Activated naive CD4-positive, alpha-beta T cell treated with anti-CD3 and anti-CD28 coated beads for 36 hours (primary cell): ENCODE measurements at regions of chr3 and their contacts with region 1.

Region 1: GRCh38 chr3:46378426-46378942 is 7.7 kb downstream of the CCR5 start:
- DNase-seq: peak; percentile 85
- H3K4me3 Mint-ChIP-seq: no peak overlapping the region
- H3K27ac Mint-ChIP-seq: no peak overlapping the region
- H3K4me1 Mint-ChIP-seq: peaks cover 19% of the 10 kb centered on the region
- H3K27me3 Mint-ChIP-seq: peaks cover 17% of the 10 kb centered on the region

Region 2: GRCh38 chr3:45793482-45794176 is 584.9 kb before region 1 on chr3:
- CTCF ChIA-PET with region 1: no interaction called
- intact Hi-C with region 1: no loop called
- DNase-seq: no peak
- H3K4me3 Mint-ChIP-seq: no peak overlapping the region
- H3K27ac Mint-ChIP-seq: no peak overlapping the region
- H3K4me1 Mint-ChIP-seq: peaks cover 7% of the 10 kb centered on the region
- H3K27me3 Mint-ChIP-seq: peaks cover 39% of the 10 kb centered on the region

Region 3: DNA sequence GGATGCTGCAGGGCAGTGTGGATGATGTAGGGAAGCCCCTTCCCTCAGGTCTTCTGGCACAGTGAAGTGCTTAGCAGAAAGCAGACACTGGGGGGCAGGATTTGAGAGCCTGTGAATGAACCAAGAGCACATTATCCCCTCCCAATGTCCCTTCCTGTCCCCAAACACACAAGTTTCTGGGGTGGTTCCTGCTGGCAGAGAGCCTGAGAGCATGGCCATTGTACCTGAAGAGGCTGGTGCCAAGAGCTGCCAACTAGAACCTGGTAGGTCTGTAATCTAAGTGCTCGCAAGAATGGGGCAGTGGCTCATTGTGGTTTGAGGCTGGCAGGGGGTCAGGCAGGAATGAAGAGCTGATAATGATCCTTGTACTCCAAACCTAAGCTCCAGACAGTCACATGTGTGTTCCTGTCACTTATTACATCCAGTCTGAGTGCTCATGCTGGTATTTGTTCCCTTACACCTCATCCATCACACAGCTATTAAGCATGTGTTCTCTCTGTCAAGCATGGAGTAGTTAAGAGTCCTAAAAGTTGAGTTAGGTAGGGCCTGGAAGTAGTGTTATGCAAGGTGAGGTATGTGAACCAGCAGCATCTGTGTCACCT is 163.6 kb before region 1 on chr3:
- CTCF ChIA-PET with region 1: interaction called, 11 read pairs
- intact Hi-C with region 1: no loop called
- DNase-seq: peak; percentile 47
- H3K4me3 Mint-ChIP-seq: no peak overlapping the region
- H3K27ac Mint-ChIP-seq: no peak overlapping the region
- H3K4me1 Mint-ChIP-seq: no peaks in the 10 kb centered on the region
- H3K27me3 Mint-ChIP-seq: no peaks in the 10 kb centered on the region

Region 4: DNA sequence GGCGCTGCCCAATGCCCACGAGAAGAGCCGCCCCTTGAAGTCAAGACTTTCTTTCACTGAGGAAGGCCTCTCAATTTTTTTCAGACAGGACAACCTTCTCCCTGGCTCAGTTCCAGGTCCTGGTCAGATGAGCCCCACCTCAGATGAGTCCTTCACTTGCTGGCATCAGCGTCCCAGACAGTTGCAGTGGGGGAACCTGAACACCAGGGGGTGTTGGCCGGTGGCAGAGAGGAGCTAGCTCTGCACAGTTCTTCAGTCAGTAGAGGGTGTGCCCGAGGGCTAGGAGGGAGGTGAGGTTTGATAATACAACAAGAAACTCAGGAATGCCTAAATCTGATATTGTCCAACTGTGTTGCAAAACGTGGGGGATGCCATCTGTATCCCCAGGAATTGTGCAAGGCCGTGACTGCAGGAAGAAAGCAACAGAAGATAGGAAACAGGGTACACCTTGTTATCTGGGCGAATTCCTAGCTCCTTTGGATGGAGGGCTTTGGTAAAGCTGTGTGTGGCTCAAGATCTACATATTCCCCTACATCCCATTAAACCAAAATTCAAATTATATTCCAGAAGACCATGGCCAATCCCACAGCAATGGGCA is 101.9 kb before region 1 on chr3:
- CTCF ChIA-PET with region 1: interaction called, 21 read pairs
- intact Hi-C with region 1: no loop called
- DNase-seq: peak; percentile 87
- H3K4me3 Mint-ChIP-seq: no peak overlapping the region
- H3K27ac Mint-ChIP-seq: no peak overlapping the region
- H3K4me1 Mint-ChIP-seq: peaks cover 20% of the 10 kb centered on the region
- H3K27me3 Mint-ChIP-seq: peaks cover 14% of the 10 kb centered on the region

Region 5: GRCh38 chr3:47193871-47194859 is 815.7 kb after region 1 on chr3:
- CTCF ChIA-PET with region 1: no interaction called
- intact Hi-C with region 1: no loop called
- DNase-seq: no peak
- H3K4me3 Mint-ChIP-seq: no peak overlapping the region
- H3K27ac Mint-ChIP-seq: no peak overlapping the region
- H3K4me1 Mint-ChIP-seq: no peaks in the 10 kb centered on the region
- H3K27me3 Mint-ChIP-seq: no peaks in the 10 kb centered on the region